ENCODE measurements at regions of chr19 and their contacts with region 1.

Region 1: DNA sequence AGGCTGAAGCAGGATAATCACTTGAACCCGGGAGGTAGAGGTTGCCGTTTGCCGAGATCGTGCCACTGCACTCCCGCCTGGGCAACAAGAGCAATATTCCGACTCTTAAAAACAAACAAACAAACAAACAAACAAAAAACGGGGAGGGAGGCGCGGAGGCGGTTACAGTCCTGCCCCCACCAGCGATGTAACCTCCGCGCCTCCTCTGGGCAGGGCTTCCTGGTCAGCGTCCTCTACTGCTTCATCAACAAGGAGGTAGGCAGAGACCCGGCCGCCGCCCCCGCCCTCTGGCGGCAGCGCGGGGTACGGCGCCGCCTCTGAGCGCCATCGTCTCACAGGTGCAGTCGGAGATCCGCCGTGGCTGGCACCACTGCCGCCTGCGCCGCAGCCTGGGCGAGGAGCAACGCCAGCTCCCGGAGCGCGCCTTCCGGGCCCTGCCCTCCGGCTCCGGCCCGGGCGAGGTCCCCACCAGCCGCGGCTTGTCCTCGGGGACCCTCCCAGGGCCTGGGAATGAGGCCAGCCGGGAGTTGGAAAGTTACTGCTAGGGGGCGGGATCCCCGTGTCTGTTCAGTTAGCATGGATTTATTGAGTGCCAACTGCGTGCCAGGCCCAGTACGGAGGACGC is 10.2 kb downstream of the SNRPD2 start:
- DNase-seq: peak; percentile 90
- H3K4me3 Mint-ChIP-seq: peak overlapping the region; percentile 71
- H3K27ac Mint-ChIP-seq: no peak overlapping the region
- H3K4me1 Mint-ChIP-seq: peaks cover 20% of the 10 kb centered on the region
- H3K27me3 Mint-ChIP-seq: no peaks in the 10 kb centered on the region

Region 2: GRCh38 chr19:45478454-45479238 is 202.9 kb before region 1 on chr19:
- CTCF ChIA-PET with region 1: interaction called, 10 read pairs
- intact Hi-C with region 1: no loop called
- DNase-seq: peak; percentile 96
- H3K4me3 Mint-ChIP-seq: peak overlapping the region; percentile 54
- H3K27ac Mint-ChIP-seq: peak overlapping the region; percentile 95
- H3K4me1 Mint-ChIP-seq: peaks cover 22% of the 10 kb centered on the region
- H3K27me3 Mint-ChIP-seq: peaks cover 2% of the 10 kb centered on the region

Region 3: DNA sequence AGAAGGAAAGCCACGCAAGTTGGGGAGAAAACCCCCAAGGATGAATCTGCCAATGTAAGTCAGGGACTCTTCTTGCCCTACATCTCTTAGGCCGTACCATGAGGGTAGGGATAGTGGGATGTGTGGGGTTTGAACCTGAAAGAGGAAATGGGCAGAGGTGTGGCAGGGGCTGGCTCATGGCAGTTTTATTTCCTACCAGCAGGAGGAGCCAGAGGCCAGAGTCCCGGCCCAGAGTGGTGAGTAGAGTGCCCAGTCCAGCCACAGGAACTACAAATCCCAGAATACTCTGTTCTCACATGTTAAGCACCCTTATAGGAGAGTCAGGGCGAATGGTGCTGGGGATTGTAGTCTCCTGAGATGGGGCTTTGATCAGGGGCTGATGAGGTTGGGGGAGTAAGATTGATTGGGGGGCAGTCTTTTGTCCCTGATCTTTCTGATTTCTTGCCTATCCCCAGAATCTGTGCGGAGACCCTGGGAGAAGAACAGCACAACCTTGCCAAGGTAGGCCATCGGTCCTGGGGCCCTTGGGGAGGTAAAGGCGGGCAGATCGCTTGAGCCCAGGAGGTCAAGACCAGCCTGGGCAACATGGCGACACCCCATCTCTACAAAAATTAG is 157.8 kb before region 1 on chr19:
- CTCF ChIA-PET with region 1: no interaction called
- intact Hi-C with region 1: loop called (anchors 1 kb)
- DNase-seq: peak; percentile 82
- H3K4me3 Mint-ChIP-seq: no peak overlapping the region
- H3K27ac Mint-ChIP-seq: peak overlapping the region; percentile 55
- H3K4me1 Mint-ChIP-seq: peaks cover 18% of the 10 kb centered on the region
- H3K27me3 Mint-ChIP-seq: no peaks in the 10 kb centered on the region

Region 4: GRCh38 chr19:45591004-45591637 is 90.4 kb before region 1 on chr19:
- CTCF ChIA-PET with region 1: interaction called, 6 read pairs
- intact Hi-C with region 1: loop called (anchors 1 kb)
- DNase-seq: peak; percentile 74
- H3K4me3 Mint-ChIP-seq: no peak overlapping the region
- H3K27ac Mint-ChIP-seq: no peak overlapping the region
- H3K4me1 Mint-ChIP-seq: peaks cover 13% of the 10 kb centered on the region
- H3K27me3 Mint-ChIP-seq: peaks cover 37% of the 10 kb centered on the region

Region 5: GRCh38 chr19:45670670-45671453 is 10.6 kb before region 1 on chr19:
- CTCF ChIA-PET with region 1: interaction called, 4 read pairs
- intact Hi-C with region 1: loop called (anchors 1 kb)
- DNase-seq: peak; percentile 78
- H3K4me3 Mint-ChIP-seq: peak overlapping the region; percentile 41
- H3K27ac Mint-ChIP-seq: no peak overlapping the region
- H3K4me1 Mint-ChIP-seq: peaks cover 36% of the 10 kb centered on the region
- H3K27me3 Mint-ChIP-seq: peaks cover 20% of the 10 kb centered on the region

Region 6: GRCh38 chr19:45701676-45702075 is 20.2 kb after region 1 on chr19:
- CTCF ChIA-PET with region 1: no interaction called
- intact Hi-C with region 1: no loop called
- DNase-seq: no peak
- H3K4me3 Mint-ChIP-seq: no peak overlapping the region
- H3K27ac Mint-ChIP-seq: no peak overlapping the region
- H3K4me1 Mint-ChIP-seq: peaks cover 6% of the 10 kb centered on the region
- H3K27me3 Mint-ChIP-seq: no peaks in the 10 kb centered on the region

Region 7: DNA sequence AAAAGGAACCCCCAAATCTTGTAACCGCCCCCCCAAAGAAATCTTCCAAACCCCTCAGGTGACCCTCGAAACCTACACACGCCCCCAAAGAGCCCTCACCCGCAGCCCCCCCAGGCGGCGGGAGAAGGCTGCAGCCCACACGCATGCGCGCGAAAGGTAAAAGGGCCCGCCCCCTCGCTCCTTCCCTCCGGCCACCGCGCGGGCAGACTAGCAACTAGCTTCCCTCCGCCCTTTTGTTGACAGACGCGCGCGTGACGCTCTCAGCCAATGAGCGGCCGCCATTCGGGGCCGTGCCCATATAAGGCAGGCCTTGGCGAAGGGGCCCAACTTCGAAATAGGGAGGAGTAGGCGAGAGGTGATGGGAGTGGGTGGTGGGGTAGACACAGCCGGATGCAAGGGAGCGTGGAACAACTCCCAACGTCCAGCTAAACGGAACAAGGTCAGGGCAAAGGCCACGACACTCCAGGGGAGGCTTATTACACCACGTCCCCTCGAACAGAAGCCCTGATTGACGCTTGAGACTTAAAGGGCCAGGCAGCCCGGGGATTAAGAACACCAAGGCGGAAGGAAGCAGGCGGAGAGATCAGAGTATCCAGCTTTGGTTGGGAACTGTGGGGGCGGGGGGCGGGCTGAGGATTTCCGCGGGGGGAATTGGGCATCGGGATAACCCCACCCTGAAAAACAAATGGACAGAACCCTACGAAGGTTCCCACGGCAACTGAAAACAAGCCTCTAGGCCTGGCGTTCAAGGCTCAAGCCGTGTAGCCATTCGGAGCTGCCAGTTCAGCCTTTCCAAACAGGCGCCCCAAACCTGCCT is 35.9 kb after region 1 on chr19:
- CTCF ChIA-PET with region 1: interaction called, 4 read pairs
- intact Hi-C with region 1: loop called (anchors 1 kb)
- DNase-seq: peak; percentile 99
- H3K4me3 Mint-ChIP-seq: peak overlapping the region; percentile 96
- H3K27ac Mint-ChIP-seq: peak overlapping the region; percentile 97
- H3K4me1 Mint-ChIP-seq: peaks cover 41% of the 10 kb centered on the region
- H3K27me3 Mint-ChIP-seq: no peaks in the 10 kb centered on the region

Region 8: GRCh38 chr19:45739498-45740439 is 58.3 kb after region 1 on chr19:
- CTCF ChIA-PET with region 1: no interaction called
- intact Hi-C with region 1: no loop called
- DNase-seq: no peak
- H3K4me3 Mint-ChIP-seq: no peak overlapping the region
- H3K27ac Mint-ChIP-seq: no peak overlapping the region
- H3K4me1 Mint-ChIP-seq: no peaks in the 10 kb centered on the region
- H3K27me3 Mint-ChIP-seq: no peaks in the 10 kb centered on the region

Region 9: DNA sequence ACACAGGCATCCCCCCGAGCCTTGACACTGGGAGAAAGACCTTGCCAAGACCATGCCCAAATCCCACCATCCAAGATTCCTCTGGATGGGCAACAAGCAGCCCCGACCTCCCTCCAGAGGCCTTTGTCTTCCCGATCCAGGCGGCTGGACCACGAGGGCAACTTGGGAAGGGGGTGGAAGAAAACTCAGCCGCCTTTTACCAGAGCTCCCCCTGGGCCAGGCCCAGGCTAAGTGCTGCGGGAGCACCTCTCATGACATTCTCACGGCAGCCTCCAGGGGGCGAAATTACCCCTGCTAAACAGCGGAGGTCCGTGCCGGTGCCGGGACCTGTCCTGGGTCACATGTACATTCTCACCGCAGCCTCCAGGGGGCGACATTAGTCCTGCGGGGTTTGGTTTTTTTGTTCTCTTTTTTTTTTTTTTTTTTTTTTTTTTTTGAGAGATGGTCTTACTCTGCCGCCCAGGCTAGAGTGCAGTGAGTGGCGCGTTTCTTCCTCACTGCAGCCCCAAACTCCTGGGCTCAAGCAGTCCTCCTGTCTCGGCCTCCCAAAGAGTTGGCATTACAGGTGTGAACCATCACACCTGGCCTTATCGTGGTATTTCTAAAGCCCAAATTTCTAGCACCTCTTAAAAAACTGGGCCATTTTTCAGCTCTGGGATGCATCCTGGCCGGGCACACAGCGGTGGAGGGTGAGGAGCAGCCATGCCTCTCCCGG is 135.7 kb after region 1 on chr19:
- CTCF ChIA-PET with region 1: no interaction called
- intact Hi-C with region 1: no loop called
- DNase-seq: peak; percentile 99
- H3K4me3 Mint-ChIP-seq: no peak overlapping the region
- H3K27ac Mint-ChIP-seq: no peak overlapping the region
- H3K4me1 Mint-ChIP-seq: peaks cover 10% of the 10 kb centered on the region
- H3K27me3 Mint-ChIP-seq: peaks cover 19% of the 10 kb centered on the region

Region 10: DNA sequence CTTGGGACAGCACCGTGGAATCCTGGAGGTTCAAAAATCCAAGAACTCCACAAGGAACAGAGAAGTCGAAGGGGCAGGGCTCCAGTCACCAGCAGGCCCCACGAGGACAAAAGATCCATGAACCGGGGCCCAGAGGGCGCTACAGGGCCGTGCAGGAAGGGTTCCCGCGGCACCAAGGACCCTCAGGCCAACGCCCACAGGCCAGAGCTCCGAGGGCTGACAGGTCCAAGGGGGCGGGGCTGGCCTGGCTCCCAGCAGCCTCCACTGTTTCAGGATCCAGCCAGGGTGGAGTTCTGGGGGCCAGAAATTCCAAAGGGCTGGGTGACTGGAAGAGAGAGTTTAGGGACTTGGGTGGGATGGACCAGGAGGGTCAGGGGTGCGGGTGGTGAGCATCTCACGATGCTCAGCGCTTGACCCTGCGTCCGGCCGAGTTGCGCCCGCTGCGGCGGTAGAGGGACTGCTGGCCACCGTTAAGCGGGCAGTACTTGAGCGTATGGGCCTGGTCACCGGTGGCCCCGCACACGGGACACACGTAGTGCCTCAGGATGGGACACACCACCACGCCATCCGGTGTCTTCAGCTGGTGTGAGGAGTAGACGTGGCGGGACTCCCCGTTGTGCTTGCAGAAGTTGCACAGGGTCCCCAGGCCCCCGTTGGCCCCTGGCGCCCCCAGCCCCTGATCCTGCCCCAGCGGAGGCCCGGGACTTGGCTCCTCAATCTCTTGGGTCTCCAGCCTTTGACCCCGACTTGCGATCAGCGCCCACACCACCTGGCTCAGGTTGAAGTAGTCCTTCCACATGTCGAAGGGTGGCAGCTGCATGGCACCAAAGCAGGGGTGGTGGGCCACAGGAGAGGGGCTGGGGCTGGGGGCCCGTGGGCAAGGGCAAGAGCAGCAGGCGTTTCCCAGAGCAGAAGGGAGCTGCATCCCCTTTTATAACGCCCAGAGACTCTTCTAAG is 232.6 kb after region 1 on chr19 and contains the start of gene NANOS2:
- CTCF ChIA-PET with region 1: no interaction called
- intact Hi-C with region 1: no loop called
- DNase-seq: no peak
- H3K4me3 Mint-ChIP-seq: no peak within 1 kb of the TSS
- H3K27ac Mint-ChIP-seq: no peak within 1 kb of the TSS
- H3K4me1 Mint-ChIP-seq: no peaks in the 10 kb centered on the region
- H3K27me3 Mint-ChIP-seq: peaks cover 15% of the 10 kb centered on the region
- total RNA-seq, gene NANOS2: not detected

Measured in activated naive CD4-positive, alpha-beta T cell treated with anti-CD3 and anti-CD28 coated beads for 36 hours (primary cell).